PC-3 (cell line): ENCODE measurements at regions of chr19 and their contacts with region 1.

Region 1: GRCh38 chr19:56140583-56141416 is at the start of gene ZNF444:
- DNase-seq: peak; percentile 99
- ATAC-seq: peak; percentile 88
- H3K4me3 ChIP-seq: peak within 1 kb of the TSS; percentile 80
- H3K27ac ChIP-seq: peak within 1 kb of the TSS; percentile 41
- H3K4me1 ChIP-seq: peaks cover 21% of the 10 kb centered on the region
- H3K27me3 ChIP-seq: no peaks in the 10 kb centered on the region
- CTCF ChIP-seq: no peak
- total RNA-seq, gene ZNF444: 40.0 and 65.0 TPM in 2 replicates

Region 2: GRCh38 chr19:56121180-56122167 is 19.3 kb before region 1 on chr19 and contains the start of gene ZNF787:
- CTCF ChIA-PET with region 1: no interaction called
- POLR2A ChIA-PET with region 1: no interaction called
- intact Hi-C with region 1: loop called (anchors 1 kb)
- DNase-seq: peak; percentile 99
- ATAC-seq: peak; percentile 83
- H3K4me3 ChIP-seq: peak within 1 kb of the TSS; percentile 75
- H3K27ac ChIP-seq: peak within 1 kb of the TSS; percentile 85
- H3K4me1 ChIP-seq: peaks cover 16% of the 10 kb centered on the region
- H3K27me3 ChIP-seq: no peaks in the 10 kb centered on the region
- CTCF ChIP-seq: no peak
- total RNA-seq, gene ZNF787: 111 and 185 TPM in 2 replicates

Region 3: DNA sequence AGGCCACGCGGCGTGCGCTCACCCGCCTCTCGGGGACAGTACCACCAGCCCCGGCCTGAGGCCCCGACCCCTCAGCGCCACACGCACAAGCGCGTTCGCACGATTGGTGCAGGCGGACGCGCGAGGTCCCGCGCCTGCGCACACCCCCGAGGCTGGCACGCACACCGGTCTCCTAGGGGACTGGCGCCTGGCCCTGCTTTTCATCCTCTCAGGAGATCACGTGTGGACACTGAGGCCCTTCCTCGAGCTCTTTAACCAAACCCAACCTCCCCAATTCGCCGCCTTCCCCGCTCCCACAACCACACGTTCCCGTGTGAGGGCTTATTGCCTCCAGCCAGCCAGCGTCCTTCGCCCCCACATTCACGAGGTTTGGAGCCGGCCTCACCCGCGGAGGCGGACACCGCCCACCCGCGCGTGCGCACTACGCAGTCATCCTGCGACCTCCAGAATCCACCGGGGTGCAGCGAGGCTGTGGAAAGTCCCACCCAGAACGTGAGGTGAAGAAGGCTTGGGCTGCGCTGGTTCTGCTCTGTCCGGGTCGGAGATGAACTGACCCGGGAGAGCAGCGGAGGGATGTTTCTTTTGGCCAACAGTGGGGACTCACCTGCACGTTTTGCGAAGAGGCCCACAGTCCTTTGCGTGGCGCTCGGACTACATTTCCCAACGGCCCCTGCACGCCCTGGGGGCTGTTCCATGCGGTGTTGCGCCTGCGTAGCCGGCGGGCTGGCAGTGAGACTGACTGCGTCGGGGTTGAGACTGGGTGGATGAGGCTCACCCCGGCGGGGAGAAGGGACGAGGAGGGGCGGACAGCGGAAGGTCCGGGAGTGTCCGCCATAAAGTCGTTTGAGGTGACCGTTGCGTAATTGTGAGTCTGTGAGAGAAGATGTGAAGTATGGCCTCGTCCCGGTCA is 336.9 kb after region 1 on chr19:
- CTCF ChIA-PET with region 1: no interaction called
- POLR2A ChIA-PET with region 1: no interaction called
- intact Hi-C with region 1: loop called (anchors 5 kb)
- DNase-seq: peak; percentile 86
- ATAC-seq: peak; percentile 90
- H3K4me3 ChIP-seq: peak overlapping the region; percentile 65
- H3K27ac ChIP-seq: peak overlapping the region; percentile 39
- H3K4me1 ChIP-seq: no peaks in the 10 kb centered on the region
- H3K27me3 ChIP-seq: no peaks in the 10 kb centered on the region
- CTCF ChIP-seq: no peak